SK-N-SH (cell line): ENCODE measurements at regions of chr6 and their contacts with region 1.

Region 1: DNA sequence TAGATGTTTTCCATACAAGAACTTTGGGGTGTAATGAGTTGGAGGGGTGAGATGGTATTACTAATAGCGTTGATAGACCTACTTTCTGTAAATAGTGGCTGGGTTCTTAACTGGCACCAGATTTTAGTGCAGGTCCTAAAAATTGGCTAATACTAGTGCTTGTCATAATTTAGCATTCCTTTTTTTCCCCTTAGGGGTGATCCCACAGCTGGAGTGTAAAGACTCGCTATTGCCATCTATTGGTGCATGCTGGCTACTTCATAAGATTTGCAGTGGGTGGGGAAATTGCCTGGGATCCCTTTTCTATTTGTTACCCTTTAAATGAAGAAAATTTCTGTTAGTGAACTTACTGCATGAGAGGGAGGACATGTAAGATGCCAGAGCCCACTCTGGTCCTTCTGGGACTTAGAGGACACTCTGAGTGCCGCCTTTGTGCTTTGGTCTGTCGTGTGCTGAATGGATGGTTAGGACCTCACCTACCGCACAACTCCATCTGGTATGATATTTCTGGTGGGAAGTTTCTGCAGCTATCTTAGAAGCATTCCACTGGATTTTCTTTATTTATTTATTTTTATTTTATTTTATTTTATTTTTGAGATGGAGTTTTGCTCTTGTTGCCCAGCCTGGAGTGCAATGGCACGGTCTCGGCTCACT is 195.5 kb downstream of the JARID2 start:
- DNase-seq: peak; percentile 70
- H3K4me3 ChIP-seq: no peak overlapping the region
- H3K27ac ChIP-seq: no peak overlapping the region
- H3K4me1 ChIP-seq: peaks cover 22 to 46% of the 10 kb centered on the region in 2 experiments
- H3K27me3 ChIP-seq: no peaks in the 10 kb centered on the region
- CTCF ChIP-seq: peak; percentile 84
- EP300 ChIP-seq: no peak
- RAD21 ChIP-seq: peak; percentile 87

Region 2: DNA sequence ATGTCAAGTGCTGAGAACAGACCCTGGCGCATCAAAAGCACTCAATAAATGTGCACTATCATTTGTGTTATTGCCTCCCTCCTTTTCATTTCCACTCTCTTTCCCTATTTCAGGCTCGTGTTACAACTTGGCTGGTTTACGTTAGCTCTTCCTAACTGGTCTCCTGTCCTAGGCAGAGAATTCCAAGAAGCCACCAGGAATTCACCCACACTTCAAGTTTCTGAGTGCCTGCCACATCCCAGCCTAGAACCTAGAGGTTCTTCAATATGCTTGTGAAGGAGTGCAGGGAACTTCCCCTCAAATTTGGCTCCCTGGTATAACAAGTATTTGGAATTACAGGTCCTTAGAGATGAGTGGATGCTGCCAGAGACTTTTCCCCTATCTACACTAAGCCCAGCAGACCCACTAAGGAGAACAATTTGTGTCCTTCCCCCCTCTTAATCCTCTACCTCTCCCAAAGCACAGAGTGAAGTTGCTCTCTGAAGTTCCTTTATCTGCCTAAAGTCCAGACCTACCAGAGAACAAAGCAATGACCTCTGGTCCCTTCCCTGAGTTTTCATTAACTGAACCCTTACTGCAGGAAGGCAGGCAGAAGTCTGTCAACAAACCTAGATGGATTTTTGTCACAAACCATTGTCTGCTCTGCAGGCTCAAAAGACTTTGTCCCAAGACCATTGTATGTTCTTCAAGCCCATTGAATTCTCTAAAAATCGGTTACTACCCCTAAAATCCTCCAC is 397.0 kb before region 1 on chr6:
- CTCF ChIA-PET with region 1: no interaction called
- POLR2A ChIA-PET with region 1: no interaction called
- DNase-seq: no peak
- H3K4me3 ChIP-seq: no peak overlapping the region
- H3K27ac ChIP-seq: no peak overlapping the region
- H3K4me1 ChIP-seq: no peaks in the 10 kb centered on the region
- H3K27me3 ChIP-seq: no peaks in the 10 kb centered on the region
- CTCF ChIP-seq: no peak
- EP300 ChIP-seq: no peak
- RAD21 ChIP-seq: no peak

Region 3: DNA sequence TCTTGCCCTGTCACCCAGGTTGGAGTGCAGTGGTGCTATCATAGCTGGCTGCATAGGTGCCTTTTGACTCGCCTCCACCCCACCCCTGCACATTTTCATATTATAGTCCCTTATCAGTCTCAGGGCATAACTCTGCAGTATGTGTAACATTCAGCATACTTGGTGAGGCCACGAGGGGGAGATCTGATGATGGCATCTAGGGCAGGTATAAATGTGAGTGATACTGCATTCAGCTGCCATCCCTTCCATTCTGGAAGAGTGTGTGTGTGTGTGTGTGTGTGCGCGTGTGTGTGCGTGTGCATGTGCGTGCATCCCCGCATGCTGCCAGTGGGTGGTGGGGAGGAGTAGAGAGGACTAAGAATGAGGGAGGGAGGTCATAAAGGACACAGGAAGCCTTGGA is 114.1 kb before region 1 on chr6:
- CTCF ChIA-PET with region 1: interaction called, 11 read pairs
- POLR2A ChIA-PET with region 1: no interaction called
- DNase-seq: peak; percentile 40
- H3K4me3 ChIP-seq: no peak overlapping the region
- H3K27ac ChIP-seq: no peak overlapping the region
- H3K4me1 ChIP-seq: peaks cover 10 to 30% of the 10 kb centered on the region in 2 experiments
- H3K27me3 ChIP-seq: no peaks in the 10 kb centered on the region
- CTCF ChIP-seq: peak; percentile 33
- EP300 ChIP-seq: no peak
- RAD21 ChIP-seq: peak; percentile 55

Region 4: GRCh38 chr6:15399641-15400470 is 41.5 kb before region 1 on chr6:
- CTCF ChIA-PET with region 1: interaction called, 11 read pairs
- POLR2A ChIA-PET with region 1: no interaction called
- DNase-seq: peak; percentile 89
- H3K4me3 ChIP-seq: peak overlapping the region; percentile 21 to 43; a peak in 3 of 4 replicates
- H3K27ac ChIP-seq: peak overlapping the region in 1 of 2 experiments; percentile 81; a peak in 2 of 4 replicates
- H3K4me1 ChIP-seq: peaks cover 16 to 23% of the 10 kb centered on the region in 2 experiments; a peak in 3 of 4 replicates
- H3K27me3 ChIP-seq: no peaks in the 10 kb centered on the region
- CTCF ChIP-seq: no peak
- EP300 ChIP-seq: peak in 1 of 2 experiments; percentile 97; a peak in 2 of 4 replicates
- RAD21 ChIP-seq: peak; percentile 36; the same call in 1 of the 2 replicates

Region 5: DNA sequence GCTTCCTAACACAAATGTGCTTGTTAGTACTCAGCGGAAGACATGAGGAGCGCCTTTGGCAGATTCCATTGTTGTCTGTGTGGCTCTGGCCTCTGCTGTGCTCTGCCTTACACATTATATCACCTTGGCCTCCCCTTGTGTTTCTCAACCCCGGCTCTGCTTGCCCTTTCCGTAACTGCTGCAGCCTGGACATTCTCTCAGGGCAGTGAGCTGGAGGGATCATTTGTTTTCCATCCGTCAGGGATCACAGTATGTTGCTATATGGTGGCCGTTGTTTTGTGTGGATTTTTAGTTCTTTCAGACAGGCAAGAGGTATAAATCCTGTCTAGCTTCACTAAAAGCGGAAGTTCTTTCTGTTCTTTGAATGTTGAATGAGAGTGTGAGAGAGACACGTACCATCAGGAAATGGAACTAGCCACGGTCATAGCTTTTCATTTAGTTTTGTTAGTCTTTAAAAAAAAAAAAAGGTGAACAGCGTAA is 20.3 kb before region 1 on chr6:
- CTCF ChIA-PET with region 1: interaction called, 10 read pairs
- POLR2A ChIA-PET with region 1: no interaction called
- DNase-seq: no peak
- H3K4me3 ChIP-seq: no peak overlapping the region
- H3K27ac ChIP-seq: no peak overlapping the region
- H3K4me1 ChIP-seq: no peaks in the 10 kb centered on the region
- H3K27me3 ChIP-seq: no peaks in the 10 kb centered on the region
- CTCF ChIP-seq: no peak
- EP300 ChIP-seq: no peak
- RAD21 ChIP-seq: no peak

Region 6: DNA sequence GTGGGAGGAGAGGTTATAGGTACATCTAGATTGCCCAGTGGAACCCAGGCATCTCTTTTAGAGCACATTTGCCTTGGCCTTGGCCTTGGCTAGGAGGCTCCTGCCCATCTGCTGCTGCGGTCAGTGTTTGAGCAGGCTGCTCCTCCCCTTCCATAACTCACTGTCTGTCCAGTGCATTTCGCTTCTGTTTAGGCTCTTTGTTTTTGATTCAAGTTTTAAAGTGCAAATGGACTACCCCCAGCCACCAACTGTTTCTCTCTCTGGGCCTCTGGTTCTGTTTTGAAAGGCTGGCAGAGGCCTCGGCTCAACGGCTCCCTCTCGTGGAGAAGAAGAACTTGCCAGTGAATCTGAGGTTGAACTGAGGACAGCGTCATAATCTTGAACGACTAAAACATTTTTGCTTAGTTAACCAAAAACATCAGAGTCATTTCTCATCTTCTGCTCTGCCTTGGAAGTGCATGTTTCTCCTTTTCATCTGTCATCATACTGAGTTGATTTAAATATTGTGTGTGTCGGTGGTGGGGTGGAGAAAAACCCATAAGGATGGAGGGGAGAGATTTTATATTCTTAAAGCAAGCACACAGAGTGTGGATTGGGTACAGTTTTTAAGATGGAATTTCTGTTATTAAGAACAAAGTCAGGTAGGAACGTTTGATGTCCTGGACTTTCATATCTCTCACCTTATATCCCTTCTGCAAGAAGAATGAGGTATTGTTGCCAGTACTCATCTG is 50.1 kb after region 1 on chr6:
- CTCF ChIA-PET with region 1: interaction called, 12 read pairs
- POLR2A ChIA-PET with region 1: no interaction called
- DNase-seq: peak; percentile 70
- H3K4me3 ChIP-seq: no peak overlapping the region; a peak in 1 of 4 replicates
- H3K27ac ChIP-seq: no peak overlapping the region
- H3K4me1 ChIP-seq: peaks cover 3 to 19% of the 10 kb centered on the region in 2 experiments; a peak in 2 of 4 replicates
- H3K27me3 ChIP-seq: no peaks in the 10 kb centered on the region
- CTCF ChIP-seq: peak; percentile 95
- EP300 ChIP-seq: no peak
- RAD21 ChIP-seq: peak; percentile 85